ENCODE measurements at regions of chr22 and their contacts with region 1.

Region 1: GRCh38 chr22:20456064-20456721 is 18.6 kb upstream of the SCARF2 start:
- DNase-seq: peak; percentile 38 to 41
- H3K4me3 ChIP-seq: no peak overlapping the region
- H3K27ac ChIP-seq: no peak overlapping the region
- H3K4me1 ChIP-seq: no peaks in the 10 kb centered on the region
- H3K27me3 ChIP-seq: no peaks in the 10 kb centered on the region
- CTCF ChIP-seq: peak; percentile 74

Region 2: GRCh38 chr22:20298803-20299735 is 157.1 kb before region 1 on chr22:
- CTCF ChIA-PET with region 1: no interaction called
- POLR2A ChIA-PET with region 1: no interaction called
- intact Hi-C with region 1: loop called (anchors 10 kb)
- DNase-seq: peak; percentile 43 to 68
- H3K4me3 ChIP-seq: peak overlapping the region; percentile 57; the same call in 1 of the 2 replicates
- H3K27ac ChIP-seq: no peak overlapping the region
- H3K4me1 ChIP-seq: no peaks in the 10 kb centered on the region
- H3K27me3 ChIP-seq: no peaks in the 10 kb centered on the region
- CTCF ChIP-seq: no peak

Region 3: GRCh38 chr22:20523086-20523983 is 67.1 kb after region 1 on chr22:
- CTCF ChIA-PET with region 1: no interaction called
- POLR2A ChIA-PET with region 1: no interaction called
- intact Hi-C with region 1: no loop called
- DNase-seq: no peak
- H3K4me3 ChIP-seq: no peak overlapping the region
- H3K27ac ChIP-seq: no peak overlapping the region
- H3K4me1 ChIP-seq: peaks cover 12% of the 10 kb centered on the region
- H3K27me3 ChIP-seq: no peaks in the 10 kb centered on the region
- CTCF ChIP-seq: no peak

Region 4: DNA sequence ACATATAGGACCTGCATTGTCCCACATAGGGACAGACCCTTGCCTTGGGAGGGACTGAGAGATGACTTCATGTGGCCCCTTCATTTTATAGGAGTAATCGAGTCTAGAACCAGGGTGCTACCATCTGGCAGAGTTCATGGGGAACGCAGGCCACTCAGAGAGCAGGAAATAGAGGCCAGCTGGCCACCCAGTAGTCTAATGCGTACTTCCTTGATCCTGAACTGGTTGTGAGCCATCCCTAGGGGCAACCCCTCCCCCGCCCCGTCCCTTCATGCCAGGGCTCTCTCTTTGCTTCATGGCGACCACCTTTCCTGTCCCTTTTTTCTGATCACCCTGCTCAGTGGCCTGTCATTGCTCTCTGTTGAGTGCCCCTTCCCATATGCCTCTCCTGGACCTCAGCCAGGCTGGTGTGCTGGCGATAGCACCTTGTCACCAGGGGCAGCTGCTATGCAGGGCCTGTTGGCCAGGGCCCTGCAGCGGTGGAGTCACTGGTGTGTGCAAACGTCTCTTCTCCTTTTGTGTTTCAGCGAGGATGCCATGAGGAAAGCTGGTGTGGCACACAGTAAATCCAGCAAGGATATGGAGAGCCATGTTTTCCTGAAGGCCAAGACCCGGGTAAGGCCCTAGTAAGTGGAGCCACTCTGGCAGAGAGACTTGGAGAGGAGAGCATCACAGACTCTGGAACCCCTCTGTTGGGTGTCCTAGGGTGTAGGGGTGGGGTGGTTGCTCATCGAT is 80.6 kb after region 1 on chr22:
- CTCF ChIA-PET with region 1: no interaction called
- POLR2A ChIA-PET with region 1: no interaction called
- intact Hi-C with region 1: no loop called
- DNase-seq: no peak
- H3K4me3 ChIP-seq: no peak overlapping the region
- H3K27ac ChIP-seq: no peak overlapping the region
- H3K4me1 ChIP-seq: peaks cover 16% of the 10 kb centered on the region
- H3K27me3 ChIP-seq: no peaks in the 10 kb centered on the region
- CTCF ChIP-seq: no peak